ENCODE measurements at regions of chr2 and their contacts with region 1.

Region 1: DNA sequence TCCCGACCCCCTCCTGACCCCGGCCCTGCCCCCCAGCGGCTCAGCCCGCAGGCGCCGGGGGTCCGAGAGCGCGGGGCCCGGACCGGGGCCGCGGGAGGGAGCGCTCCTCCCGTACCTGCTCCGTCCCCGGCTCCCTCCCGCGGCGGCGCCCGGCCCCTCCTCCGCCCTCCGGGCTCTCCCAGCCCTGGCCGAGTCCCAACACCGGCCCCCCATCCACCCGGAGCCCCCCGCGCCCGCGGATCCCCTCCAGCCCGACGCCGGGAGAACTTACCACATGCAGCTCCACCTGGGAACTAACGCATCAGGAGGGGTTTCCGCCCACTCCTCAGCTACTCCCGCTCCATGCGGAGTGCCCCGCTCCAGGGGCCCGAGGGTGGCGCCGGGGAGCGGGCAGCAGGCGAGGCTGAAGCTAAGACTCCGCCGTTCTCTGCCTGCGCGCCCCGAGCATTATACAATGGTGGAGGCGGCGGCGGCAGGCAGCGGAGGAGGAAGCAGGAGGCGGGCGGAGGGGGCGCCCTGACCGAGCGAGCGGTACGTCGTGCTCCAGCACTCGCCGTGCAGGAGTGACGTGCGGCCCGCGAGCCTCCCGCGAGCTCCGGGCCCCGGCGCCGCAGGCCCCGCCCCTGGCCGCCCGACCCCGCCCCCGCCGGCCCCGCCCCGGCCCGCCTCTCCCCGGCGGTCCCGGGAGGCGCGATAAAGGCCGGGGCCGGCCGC is at the start of gene SERTAD2:
- DNase-seq: peak; percentile 84
- ATAC-seq: peak; percentile 79
- H3K4me3 Mint-ChIP-seq: peak within 1 kb of the TSS; percentile 91
- H3K27ac Mint-ChIP-seq: peak within 1 kb of the TSS; percentile 93
- H3K4me1 Mint-ChIP-seq: peaks cover 82% of the 10 kb centered on the region
- H3K27me3 Mint-ChIP-seq: no peaks in the 10 kb centered on the region
- CTCF ChIP-seq: no peak
- total RNA-seq, gene SERTAD2: 45.6 and 47.3 TPM in 2 replicates

Region 2: DNA sequence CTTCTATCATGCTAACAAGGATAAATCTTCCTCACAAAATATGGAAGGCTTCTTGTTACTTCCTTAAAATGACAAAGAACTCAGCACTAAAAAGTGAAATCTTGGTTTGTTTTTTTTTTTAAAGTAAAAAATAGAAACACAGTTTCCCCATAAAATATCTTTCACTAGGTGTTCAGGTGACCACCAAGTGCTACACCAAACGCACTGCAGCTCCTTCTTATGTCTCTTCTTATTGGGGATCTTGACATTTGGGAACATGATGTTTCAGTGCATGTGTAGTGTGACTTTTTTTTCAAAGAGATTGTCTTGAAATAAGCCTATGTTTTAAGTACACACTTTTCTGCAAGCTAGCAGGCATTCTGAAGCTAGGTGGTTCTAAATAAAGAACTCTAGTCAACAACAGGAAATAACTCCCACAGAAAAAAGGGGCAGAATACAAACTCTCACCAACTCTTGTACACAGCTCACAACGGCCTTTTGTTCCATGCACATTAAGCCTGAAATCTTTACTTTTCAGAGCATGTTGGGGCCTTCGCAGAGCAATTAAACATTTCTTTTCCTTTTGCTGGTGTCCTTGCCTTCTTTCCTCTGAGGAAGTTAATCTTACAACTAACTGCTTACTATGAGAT is 13.4 kb after region 1 on chr2:
- CTCF ChIA-PET with region 1: interaction called, 31 read pairs
- POLR2A ChIA-PET with region 1: interaction called, 116 read pairs
- intact Hi-C with region 1: no loop called
- DNase-seq: no peak
- ATAC-seq: peak; percentile 28
- H3K4me3 Mint-ChIP-seq: peak overlapping the region; percentile 3
- H3K27ac Mint-ChIP-seq: peak overlapping the region; percentile 79
- H3K4me1 Mint-ChIP-seq: peaks cover 26% of the 10 kb centered on the region
- H3K27me3 Mint-ChIP-seq: no peaks in the 10 kb centered on the region
- CTCF ChIP-seq: no peak

Region 3: DNA sequence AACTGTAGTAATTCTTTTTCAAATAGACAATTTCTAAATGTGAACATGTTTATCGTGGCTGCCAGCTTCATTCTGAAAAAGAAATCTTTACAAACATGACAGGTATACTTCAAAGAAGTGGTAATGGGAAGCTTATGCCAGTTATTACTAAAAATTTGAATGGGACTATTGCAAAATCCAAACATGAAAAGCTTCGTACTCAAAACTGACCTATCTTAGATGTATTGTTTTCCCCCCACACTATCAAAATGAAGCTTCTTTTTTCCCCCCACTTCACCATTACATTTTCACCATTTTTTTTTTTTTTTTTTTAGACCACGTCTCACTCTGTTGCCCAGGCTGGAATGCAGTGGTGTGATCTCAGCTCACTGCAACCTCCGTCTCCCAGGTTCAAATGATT is 50.7 kb after region 1 on chr2:
- CTCF ChIA-PET with region 1: interaction called, 3 read pairs
- POLR2A ChIA-PET with region 1: interaction called, 56 read pairs
- intact Hi-C with region 1: loop called (anchors 1 kb)
- DNase-seq: no peak
- ATAC-seq: no peak
- H3K4me3 Mint-ChIP-seq: no peak overlapping the region
- H3K27ac Mint-ChIP-seq: no peak overlapping the region
- H3K4me1 Mint-ChIP-seq: peaks cover 18% of the 10 kb centered on the region
- H3K27me3 Mint-ChIP-seq: no peaks in the 10 kb centered on the region
- CTCF ChIP-seq: no peak

Region 4: GRCh38 chr2:64742678-64743077 is 89.2 kb after region 1 on chr2:
- CTCF ChIA-PET with region 1: interaction called, 69 read pairs
- POLR2A ChIA-PET with region 1: interaction called, 439 read pairs
- intact Hi-C with region 1: no loop called
- DNase-seq: no peak
- ATAC-seq: no peak
- H3K4me3 Mint-ChIP-seq: no peak overlapping the region
- H3K27ac Mint-ChIP-seq: no peak overlapping the region
- H3K4me1 Mint-ChIP-seq: peaks cover 4% of the 10 kb centered on the region
- H3K27me3 Mint-ChIP-seq: no peaks in the 10 kb centered on the region
- CTCF ChIP-seq: no peak

Region 5: DNA sequence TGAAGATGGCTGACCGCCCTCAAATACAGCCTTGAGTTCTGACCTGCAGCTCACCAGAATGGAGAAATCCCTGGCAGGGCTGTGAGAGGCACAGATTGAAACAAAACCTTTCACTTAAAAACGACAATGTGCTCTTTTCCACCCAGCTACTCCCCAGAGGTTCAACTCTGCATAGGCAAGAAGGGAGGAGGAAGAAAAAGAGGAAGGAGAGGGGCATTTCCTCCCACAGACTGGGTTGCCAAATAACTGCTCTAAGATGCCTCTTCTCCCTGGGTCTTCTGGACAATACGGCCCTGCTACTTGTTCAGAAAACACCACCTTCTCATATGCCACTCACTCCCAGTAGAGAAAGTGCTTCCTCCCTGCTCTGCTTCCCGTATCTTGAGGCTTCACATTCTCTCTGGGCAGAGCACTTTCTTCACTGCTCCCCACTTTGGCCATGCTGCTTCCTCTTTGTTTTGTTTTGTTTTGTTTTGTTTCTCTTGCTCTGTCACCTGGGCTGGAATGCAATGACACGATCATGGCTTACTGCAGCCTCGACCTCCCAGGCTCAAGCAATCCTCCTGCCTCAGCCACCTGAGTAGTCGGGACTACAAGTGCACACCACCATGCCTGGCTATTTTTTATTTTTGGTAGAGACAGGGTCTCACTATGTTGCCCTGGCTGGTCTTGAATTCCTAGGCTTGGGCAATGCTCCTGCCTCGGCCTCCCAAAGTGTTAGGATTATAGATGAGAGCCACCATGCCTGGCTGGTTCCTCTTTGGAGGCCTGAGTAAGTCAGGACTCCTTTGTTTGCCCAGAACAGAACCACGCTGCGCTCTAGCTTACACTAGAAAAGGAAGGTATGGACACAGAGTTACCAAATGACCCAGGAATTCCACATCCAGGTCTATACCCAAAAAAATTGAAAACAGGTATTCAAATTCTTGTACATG is 199.5 kb after region 1 on chr2:
- CTCF ChIA-PET with region 1: no interaction called
- POLR2A ChIA-PET with region 1: interaction called, 276 read pairs
- intact Hi-C with region 1: no loop called
- DNase-seq: no peak
- ATAC-seq: peak; percentile 80
- H3K4me3 Mint-ChIP-seq: peak overlapping the region; percentile 45
- H3K27ac Mint-ChIP-seq: peak overlapping the region; percentile 83
- H3K4me1 Mint-ChIP-seq: peaks cover 75% of the 10 kb centered on the region
- H3K27me3 Mint-ChIP-seq: no peaks in the 10 kb centered on the region
- CTCF ChIP-seq: no peak

Region 6: GRCh38 chr2:65620524-65620923 is 967.0 kb after region 1 on chr2:
- CTCF ChIA-PET with region 1: no interaction called
- POLR2A ChIA-PET with region 1: no interaction called
- intact Hi-C with region 1: no loop called
- DNase-seq: no peak
- ATAC-seq: no peak
- H3K4me3 Mint-ChIP-seq: no peak overlapping the region
- H3K27ac Mint-ChIP-seq: no peak overlapping the region
- H3K4me1 Mint-ChIP-seq: peaks cover 17% of the 10 kb centered on the region
- H3K27me3 Mint-ChIP-seq: peaks cover 8% of the 10 kb centered on the region
- CTCF ChIP-seq: no peak

Measured in activated B cell treated with CpG ODN at 0.5 μM for 24 hours (primary cell).